ENCODE measurements at regions of chr2 and their contacts with region 1.

Region 1: DNA sequence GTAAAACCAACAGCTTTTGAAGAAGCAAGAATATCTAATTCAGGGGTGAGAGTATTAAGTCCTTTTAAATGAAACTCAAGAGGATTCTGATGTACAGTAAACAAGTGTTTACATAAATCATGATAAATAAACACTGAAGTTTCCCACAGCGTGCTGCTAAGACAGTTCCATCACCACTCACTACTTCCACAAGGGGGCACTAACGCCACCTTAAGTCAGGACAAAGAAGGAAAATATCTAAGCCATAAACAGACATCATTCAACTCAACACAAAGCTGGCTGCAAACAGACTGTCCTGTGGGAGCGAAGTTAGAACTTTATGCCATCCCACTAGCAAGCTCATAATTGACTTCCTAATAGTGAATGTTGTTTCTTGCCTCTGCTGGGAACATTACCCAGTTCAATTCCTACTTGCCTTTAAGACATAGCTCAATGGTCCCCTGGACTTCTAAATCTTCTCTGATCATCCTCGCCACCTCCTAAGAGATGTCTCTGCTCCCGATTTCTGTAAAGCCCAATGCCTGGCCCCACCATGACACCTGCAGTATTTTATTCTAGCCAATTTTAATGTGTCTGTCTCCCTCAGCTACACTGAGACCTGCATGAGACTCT is 36.5 kb downstream of the MRPL44 start:
- DNase-seq: peak; percentile 53
- H3K4me3 ChIP-seq: no peak overlapping the region
- H3K27ac ChIP-seq: no peak overlapping the region
- H3K27me3 ChIP-seq: no peaks in the 10 kb centered on the region
- CTCF ChIP-seq: peak; percentile 84

Region 2: DNA sequence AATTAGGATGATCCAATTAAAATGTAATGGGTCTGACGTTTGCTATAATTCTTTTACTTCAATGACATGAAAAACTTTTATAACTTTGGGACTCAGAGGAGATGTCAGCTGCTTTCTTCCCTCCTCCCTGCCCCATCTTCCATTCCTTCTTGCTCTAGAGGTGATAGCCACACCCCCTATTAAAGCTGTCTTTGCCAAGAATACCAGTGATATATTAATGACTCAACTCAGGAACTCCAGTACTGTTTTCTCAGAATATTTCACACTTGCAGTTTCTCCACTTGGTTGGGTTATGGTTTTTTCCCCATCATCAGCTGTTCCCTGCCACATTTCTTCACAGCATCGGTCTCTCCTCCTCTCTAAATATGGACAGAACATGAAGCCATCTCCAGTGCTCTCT is 757.7 kb before region 1 on chr2:
- CTCF ChIA-PET with region 1: no interaction called
- POLR2A ChIA-PET with region 1: no interaction called
- DNase-seq: no peak
- H3K4me3 ChIP-seq: no peak overlapping the region
- H3K27ac ChIP-seq: no peak overlapping the region
- H3K27me3 ChIP-seq: no peaks in the 10 kb centered on the region
- CTCF ChIP-seq: no peak

Region 3: GRCh38 chr2:223957092-223957851 is 36.5 kb before region 1 on chr2 and contains the start of gene MRPL44:
- CTCF ChIA-PET with region 1: interaction called, 16 read pairs
- POLR2A ChIA-PET with region 1: no interaction called
- DNase-seq: peak; percentile 85
- H3K4me3 ChIP-seq: peak within 1 kb of the TSS; percentile 85
- H3K27ac ChIP-seq: peak within 1 kb of the TSS; percentile 57
- H3K27me3 ChIP-seq: no peaks in the 10 kb centered on the region
- CTCF ChIP-seq: no peak
- polyA plus RNA-seq, gene MRPL44: 22.0 and 24.3 TPM in 2 replicates

Region 4: GRCh38 chr2:224008702-224009261 is 15.1 kb after region 1 on chr2:
- CTCF ChIA-PET with region 1: interaction called, 78 read pairs
- POLR2A ChIA-PET with region 1: no interaction called
- DNase-seq: no peak
- H3K4me3 ChIP-seq: no peak overlapping the region
- H3K27ac ChIP-seq: no peak overlapping the region
- H3K27me3 ChIP-seq: no peaks in the 10 kb centered on the region
- CTCF ChIP-seq: no peak

Region 5: DNA sequence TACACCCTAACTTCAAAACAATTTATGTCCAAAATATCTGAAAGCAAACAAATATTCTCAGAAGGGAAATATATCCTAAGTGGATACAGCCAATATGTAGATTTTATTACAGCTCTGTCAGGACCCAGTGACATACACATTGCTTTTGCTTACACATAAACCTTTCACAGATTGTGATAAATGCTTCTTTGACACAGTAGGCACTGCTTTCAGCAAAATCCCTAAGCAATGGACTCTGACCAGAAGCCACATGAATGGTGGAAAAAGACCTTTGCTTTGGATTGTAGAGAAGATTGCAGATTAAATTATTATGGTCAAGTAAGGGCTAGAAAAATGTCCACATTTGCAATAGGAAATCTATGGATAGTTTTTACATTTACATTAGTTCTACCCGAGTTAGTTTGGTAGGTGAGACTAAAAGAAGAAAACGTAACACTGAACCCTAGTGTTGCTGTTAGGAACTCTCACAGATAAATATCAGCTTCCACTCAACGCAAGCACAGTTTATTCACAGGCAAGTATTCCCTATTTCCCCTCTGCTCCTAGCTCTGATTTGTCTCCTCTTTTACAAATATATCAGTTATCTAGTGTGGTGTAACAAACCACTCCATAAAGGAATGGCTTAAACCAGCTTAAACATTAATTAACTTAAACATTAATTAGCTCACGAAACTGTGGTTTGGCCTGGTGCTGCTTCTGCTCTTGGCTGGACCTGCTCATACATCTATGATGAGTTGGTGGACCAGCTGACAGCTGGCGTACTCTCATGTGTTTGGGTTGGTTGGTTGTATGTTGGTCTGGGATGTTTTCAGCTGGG is 69.0 kb after region 1 on chr2:
- CTCF ChIA-PET with region 1: interaction called, 15 read pairs
- POLR2A ChIA-PET with region 1: no interaction called
- DNase-seq: no peak
- H3K4me3 ChIP-seq: no peak overlapping the region
- H3K27ac ChIP-seq: no peak overlapping the region
- H3K27me3 ChIP-seq: no peaks in the 10 kb centered on the region
- CTCF ChIP-seq: no peak

Region 6: DNA sequence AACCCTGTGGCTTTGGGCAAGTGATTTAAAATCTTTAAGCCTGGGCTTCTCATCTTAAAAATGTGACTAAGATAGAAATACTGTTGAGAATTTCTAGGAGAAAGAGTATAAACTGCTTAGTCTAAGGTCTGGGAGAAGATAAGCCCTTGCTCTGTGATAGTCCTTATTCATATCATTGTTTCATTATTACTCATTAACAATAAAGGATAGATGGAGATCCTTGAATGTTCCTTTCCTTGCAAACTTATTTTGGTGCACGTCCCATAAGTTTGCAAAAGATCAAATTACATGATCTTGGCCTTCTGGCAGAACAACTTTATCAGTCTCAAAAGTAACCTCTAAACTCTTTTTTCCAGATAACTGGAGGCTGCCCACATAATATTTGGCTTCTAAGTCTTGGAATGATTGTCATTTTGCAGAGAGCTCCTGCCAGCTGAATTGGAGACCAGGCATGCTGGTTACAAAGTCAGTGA is 269.9 kb after region 1 on chr2:
- CTCF ChIA-PET with region 1: interaction called, 11 read pairs
- POLR2A ChIA-PET with region 1: no interaction called
- DNase-seq: no peak
- H3K4me3 ChIP-seq: no peak overlapping the region
- H3K27ac ChIP-seq: no peak overlapping the region
- H3K27me3 ChIP-seq: no peaks in the 10 kb centered on the region
- CTCF ChIP-seq: no peak

Region 7: DNA sequence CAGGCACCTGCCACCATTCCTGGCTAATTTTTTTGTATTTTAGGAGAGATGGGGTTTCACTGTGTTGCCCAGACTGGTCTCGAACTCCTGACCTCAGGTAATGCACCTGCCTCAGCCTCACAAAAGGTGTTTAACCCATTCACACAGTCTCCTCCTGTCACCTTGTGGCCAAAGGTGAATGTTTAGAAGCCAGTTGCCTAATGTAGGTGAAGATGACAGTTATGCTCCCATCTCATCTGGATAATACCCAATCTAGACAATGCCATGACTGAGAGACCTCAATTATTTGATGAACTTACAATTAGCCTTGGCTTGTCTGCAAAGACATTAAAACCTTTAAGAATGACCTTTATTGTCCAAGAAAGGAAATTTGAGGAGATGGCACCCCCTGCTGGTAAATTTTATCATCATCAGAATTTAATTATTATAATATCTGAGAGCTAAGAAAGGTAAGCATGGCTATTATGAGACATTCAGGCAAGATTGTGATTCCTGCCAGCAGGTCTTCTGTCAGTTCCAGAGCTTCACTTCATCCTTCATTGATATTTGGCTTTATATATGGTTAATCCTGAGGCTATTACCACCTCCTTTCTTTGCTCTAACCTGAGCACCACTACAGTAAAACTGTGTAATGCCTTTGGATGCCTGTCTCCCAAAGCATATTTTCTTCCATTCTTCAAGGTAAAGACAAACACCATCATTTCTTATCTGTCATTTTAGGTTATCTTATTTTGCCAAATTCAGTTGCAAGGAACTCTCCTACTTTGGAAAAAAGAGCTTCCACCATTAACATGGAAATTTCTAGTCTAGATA is 290.6 kb after region 1 on chr2:
- CTCF ChIA-PET with region 1: interaction called, 477 read pairs
- POLR2A ChIA-PET with region 1: interaction called, 9 read pairs
- DNase-seq: no peak
- H3K4me3 ChIP-seq: no peak overlapping the region
- H3K27ac ChIP-seq: no peak overlapping the region
- H3K27me3 ChIP-seq: peaks cover 11% of the 10 kb centered on the region
- CTCF ChIP-seq: peak; percentile 52

Measured in AG04450 (cell line).